Activated CD4-positive, alpha-beta T cell treated with anti-CD3 and anti-CD28 coated beads, Interleukin-2, amount 10 ng/mL, durations not matched to agents 24 days and 14 days (primary cell): ENCODE measurements at regions of chr1 and their contacts with region 1.

Region 1: DNA sequence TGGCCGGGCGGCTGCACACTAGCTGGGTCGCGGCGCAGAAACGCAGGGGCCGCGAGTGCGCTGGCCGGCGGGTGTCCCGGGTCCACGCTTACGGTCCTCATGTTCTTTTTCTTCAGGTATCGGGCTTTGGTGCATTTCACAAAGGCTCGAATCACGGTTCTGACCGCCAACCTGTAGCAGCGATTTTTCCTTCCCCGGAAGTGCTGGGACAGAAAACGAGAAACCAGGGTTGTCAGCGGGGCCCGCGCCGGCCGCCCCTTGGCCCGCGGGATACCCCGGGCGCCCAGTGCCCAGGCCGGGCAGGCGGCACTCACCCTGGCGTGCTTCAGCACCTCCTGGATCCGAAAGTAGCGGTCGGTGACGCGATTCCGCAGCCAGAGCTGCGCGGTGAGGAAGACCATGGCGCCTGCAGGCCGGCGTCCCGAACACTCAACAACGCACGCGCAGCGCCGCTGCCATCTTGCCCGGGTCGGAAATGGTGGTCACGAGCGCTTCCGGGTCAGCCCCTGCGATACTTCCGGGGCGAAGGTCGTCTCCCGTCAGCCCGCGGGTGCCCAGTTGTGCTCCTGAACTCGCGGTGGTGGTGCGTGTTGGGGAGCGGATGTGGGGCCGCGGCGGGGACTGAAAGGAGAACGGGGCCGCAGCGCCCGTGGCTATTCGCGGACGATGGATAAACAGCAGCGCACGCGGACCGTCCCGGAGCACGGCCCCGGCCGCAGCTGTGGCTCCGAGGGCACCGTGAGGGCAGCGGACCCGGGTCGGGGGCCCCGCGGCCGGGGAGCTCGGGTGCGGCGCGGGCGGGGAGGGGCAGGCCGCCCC is at the start of gene MRPL20:
- DNase-seq: peak; percentile 99
- H3K4me3 Mint-ChIP-seq: peak within 1 kb of the TSS; percentile 96
- H3K27ac Mint-ChIP-seq: peak within 1 kb of the TSS; percentile 95
- H3K4me1 Mint-ChIP-seq: peaks cover 26% of the 10 kb centered on the region
- H3K27me3 Mint-ChIP-seq: no peaks in the 10 kb centered on the region
- total RNA-seq, gene MRPL20: 187 and 194 TPM in 2 replicates

Region 2: GRCh38 chr1:1441002-1441888 is 34.2 kb after region 1 on chr1:
- intact Hi-C with region 1: loop called (anchors 2 kb)
- DNase-seq: peak; percentile 88
- H3K4me3 Mint-ChIP-seq: no peak overlapping the region
- H3K27ac Mint-ChIP-seq: no peak overlapping the region
- H3K4me1 Mint-ChIP-seq: peaks cover 3% of the 10 kb centered on the region
- H3K27me3 Mint-ChIP-seq: peaks cover 3% of the 10 kb centered on the region

Region 3: DNA sequence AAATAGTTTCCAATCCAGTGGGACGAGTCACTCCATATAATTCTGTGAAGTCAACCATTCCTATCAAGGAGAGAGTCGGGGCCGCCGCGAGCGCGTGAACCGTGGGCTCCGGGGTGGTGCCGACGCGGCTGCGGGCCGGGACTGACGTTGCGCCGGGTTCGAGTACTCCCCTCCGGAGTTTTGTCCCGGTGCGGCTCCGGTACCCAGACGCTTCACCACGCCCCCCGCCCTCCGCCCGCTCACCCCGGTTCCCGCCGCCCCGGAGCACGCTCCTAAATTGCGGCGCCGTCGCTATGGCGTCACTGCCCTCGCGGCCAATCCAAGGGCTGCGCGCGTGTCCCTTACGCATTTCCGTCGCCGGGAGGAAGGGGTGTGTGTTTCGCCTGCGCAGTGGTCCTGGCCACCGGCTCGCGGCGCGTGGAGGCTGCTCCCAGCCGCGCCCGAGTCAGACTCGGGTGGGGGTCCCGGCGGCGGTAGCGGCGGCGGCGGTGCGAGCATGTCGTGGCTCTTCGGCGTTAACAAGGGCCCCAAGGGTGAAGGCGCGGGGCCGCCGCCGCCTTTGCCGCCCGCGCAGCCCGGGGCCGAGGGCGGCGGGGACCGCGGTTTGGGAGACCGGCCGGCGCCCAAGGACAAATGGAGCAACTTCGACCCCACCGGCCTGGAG is 64.5 kb after region 1 on chr1 and contains the start of gene ATAD3B:
- intact Hi-C with region 1: loop called (anchors 1 kb)
- DNase-seq: peak; percentile 98
- H3K4me3 Mint-ChIP-seq: peak within 1 kb of the TSS; percentile 90
- H3K27ac Mint-ChIP-seq: peak within 1 kb of the TSS; percentile 82
- H3K4me1 Mint-ChIP-seq: peaks cover 15% of the 10 kb centered on the region
- H3K27me3 Mint-ChIP-seq: no peaks in the 10 kb centered on the region
- total RNA-seq, gene ATAD3B: 98.0 and 98.5 TPM in 2 replicates

Region 4: DNA sequence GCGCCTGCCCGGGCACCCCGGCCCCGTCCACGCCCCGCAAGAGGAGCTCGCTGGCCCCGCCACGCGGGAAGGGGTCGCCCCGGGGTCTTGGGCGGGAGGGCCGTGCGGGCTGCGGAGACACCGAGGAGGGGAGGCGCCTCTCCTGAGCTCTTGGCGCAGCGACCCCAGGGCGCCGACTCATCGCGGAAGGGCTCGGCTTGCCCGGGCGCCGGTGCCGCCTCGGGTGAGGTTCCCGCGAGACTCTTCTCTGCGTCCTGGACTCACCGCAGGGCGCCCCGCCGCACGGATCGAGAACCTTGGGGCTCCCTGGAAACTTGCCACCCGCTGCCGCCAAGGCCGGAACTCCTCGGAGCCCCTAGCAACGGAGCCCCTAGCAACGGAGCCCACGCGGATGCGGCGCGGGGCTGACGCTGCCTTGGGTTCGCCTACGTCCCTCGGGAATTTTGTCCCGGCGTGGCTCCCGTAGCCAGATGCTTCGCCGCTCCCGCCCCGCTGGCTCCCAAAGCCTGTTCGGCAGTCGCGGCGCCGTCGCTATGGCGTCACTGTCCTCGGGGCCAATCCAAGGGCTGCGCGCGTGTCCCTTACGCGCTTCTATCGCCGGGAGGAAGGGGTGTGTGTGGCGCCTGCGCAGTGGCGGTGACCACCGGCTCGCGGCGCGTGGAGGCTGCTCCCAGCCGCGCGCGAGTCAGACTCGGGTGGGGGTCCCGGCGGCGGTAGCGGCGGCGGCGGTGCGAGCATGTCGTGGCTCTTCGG is 104.7 kb after region 1 on chr1 and contains the start of gene ATAD3A:
- intact Hi-C with region 1: loop called (anchors 5 kb)
- DNase-seq: peak; percentile 99
- H3K4me3 Mint-ChIP-seq: peak within 1 kb of the TSS; percentile 82
- H3K27ac Mint-ChIP-seq: peak within 1 kb of the TSS; percentile 88
- H3K4me1 Mint-ChIP-seq: peaks cover 8% of the 10 kb centered on the region
- H3K27me3 Mint-ChIP-seq: no peaks in the 10 kb centered on the region
- total RNA-seq, gene ATAD3A: 102 and 107 TPM in 2 replicates